Aorta (tissue), 5 donors: ENCODE measurements at regions of chr10 and their contacts with region 1.

Region 1: DNA sequence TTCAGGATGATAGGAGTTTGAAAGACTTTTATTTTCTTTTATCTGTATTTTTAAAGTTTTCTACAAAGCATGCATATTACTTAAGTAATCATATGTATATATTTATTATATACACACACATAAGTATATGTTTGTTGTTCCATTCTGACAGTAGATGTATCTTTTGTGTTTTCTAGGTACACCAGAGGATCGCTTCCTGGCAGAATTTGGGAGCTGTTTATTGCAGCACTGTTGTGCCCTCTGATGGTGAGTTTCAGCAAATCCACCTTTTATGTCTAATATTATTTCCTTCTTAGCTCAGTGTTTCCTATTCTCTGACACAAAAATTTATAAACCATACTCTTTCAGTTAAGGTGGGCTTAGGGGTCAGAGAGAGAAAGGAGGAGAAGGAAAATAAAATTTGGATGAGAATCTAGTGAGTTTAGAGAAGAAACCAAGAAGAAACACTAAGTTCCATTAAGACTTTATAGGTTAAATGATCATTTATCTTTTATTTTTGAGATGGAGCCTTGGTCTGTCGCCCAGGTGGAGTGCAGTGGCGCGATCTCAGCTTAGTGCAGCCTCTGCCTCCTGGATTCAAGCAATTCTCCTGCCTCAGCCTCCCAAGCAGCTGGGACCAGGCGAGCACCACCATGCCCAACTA is 59.2 kb upstream of the OIT3 start:
- DNase-seq: no peak
- ATAC-seq: peak; percentile 76
- H3K4me3 ChIP-seq: no peak overlapping the region
- H3K27ac ChIP-seq: no peak overlapping the region
- H3K4me1 ChIP-seq: no peaks in the 10 kb centered on the region
- H3K27me3 ChIP-seq: no peaks in the 10 kb centered on the region

Region 2: DNA sequence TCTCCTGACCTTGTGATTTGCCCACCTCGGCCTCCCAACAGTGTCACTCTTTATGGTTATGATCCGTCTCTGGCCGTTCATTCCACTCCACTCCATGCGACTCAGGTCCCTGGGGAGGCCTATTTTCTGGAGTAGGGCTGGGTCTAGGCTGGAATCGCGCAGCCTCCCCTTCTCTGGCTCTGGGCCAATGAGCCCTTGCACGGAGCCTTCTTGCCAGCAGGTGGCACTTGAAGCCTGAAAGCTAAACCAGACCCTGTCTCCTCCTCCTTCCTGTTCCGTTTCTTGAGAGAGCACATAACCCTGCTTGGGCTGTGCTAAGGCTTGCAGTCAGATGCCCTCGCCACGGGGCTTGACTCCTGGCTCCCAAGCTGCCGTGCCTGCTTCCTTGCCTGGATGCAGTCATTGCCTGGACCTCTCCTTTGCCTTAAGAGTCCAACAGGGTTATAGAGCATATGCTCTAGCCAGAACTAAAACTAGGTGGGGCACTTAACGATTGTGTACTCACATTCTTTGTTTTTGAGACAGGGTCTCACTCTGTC is 470.0 kb before region 1 on chr10:
- intact Hi-C with region 1: loop called (anchors 2 to 10 kb)
- DNase-seq: peak; percentile 92 to 96
- ATAC-seq: peak; percentile 94
- H3K4me3 ChIP-seq: no peak overlapping the region
- H3K27ac ChIP-seq: peak overlapping the region in 1 of 2 donors; percentile 35
- H3K4me1 ChIP-seq: no peaks in the 10 kb centered on the region
- H3K27me3 ChIP-seq: no peaks in the 10 kb centered on the region

Region 3: DNA sequence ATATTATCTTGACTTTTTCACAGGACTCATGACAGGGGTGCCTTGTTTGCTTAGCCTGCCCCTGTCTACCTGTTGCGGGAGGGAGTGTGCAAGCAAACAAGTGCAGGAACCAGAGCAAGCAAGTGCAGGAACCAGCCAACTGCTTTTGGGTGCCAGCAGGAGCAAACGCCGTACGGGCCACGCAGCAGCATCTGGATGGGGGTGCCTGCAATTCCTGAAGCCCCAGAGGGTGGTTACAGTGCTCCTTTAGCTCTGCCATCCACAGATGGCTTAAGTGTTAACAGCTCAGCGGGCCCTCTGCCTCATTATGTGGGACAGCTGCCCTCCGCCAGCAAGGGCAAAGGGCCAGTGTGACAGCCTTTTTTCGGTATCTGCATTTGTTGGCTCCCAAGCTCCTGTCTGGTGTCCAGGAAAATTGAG is 291.9 kb before region 1 on chr10:
- intact Hi-C with region 1: loop called in 1 of 2 experiments (anchors 10 kb)
- DNase-seq: no peak
- ATAC-seq: no peak
- H3K4me3 ChIP-seq: no peak overlapping the region
- H3K27ac ChIP-seq: no peak overlapping the region
- H3K4me1 ChIP-seq: no peaks in the 10 kb centered on the region
- H3K27me3 ChIP-seq: no peaks in the 10 kb centered on the region

Region 4: GRCh38 chr10:72692057-72692910 is 142.0 kb before region 1 on chr10 and contains the start of gene MCU:
- intact Hi-C with region 1: loop called in 1 of 2 experiments (anchors 5 kb)
- DNase-seq: peak; percentile 96 to 98
- ATAC-seq: peak; percentile 96
- H3K4me3 ChIP-seq: peak within 1 kb of the TSS; percentile 80 to 87
- H3K27ac ChIP-seq: peak within 1 kb of the TSS; percentile 92 to 98
- H3K4me1 ChIP-seq: peaks cover 5% of the 10 kb centered on the region in 2 donors
- H3K27me3 ChIP-seq: no peaks in the 10 kb centered on the region
- total RNA-seq, gene MCU: 31.5 to 45.6 TPM

Region 5: GRCh38 chr10:72702868-72703581 is 131.3 kb before region 1 on chr10:
- intact Hi-C with region 1: loop called in 1 of 2 experiments (anchors 5 kb)
- DNase-seq: no peak
- ATAC-seq: peak; percentile 84
- H3K4me3 ChIP-seq: no peak overlapping the region
- H3K27ac ChIP-seq: peak overlapping the region in 1 of 2 donors; percentile 76
- H3K4me1 ChIP-seq: no peaks in the 10 kb centered on the region
- H3K27me3 ChIP-seq: no peaks in the 10 kb centered on the region

Region 6: DNA sequence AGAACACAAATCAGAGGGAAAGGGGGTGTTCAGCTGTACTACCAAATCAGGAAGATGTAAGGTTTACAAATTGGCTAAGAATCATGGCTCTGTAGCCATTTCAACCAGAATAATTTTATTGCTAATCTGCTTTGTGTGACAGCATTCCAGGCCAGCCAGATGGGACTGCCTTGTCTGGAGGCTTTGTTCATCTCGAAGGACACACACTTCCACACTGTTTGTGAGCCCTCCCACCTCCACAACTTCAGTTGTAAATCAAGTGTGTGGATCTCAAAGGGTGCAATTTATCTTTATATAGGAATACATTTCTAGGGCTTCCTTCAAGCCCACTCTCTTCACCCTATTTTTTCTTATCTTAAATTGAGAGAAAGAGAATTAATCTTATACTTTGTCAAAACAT is 52.3 kb after region 1 on chr10:
- intact Hi-C with region 1: no loop called
- DNase-seq: no peak
- ATAC-seq: no peak
- H3K4me3 ChIP-seq: no peak overlapping the region
- H3K27ac ChIP-seq: no peak overlapping the region
- H3K4me1 ChIP-seq: no peaks in the 10 kb centered on the region
- H3K27me3 ChIP-seq: no peaks in the 10 kb centered on the region